ENCODE measurements at regions of chr5 and their contacts with region 1.

Region 1: DNA sequence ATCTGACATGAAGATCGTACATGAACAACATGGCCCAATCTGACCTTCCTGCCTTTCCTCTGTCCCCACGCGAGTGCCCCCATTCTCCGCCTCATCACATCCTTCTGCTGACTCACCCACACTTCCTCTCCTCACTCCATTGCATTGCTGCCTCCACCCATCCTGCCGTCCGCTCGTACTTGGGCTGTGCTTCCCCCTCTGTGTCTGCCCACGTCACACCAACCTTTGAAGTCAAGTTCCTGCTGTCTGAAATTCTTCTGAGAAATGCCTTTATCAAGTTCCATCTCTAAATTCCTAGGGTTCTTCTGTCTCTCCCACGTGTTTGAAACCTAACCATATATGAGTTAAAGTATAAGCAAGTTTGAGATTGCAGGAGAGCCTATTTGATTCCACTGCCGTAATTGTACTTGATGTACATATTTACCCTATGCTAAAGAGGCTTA is 18.0 kb upstream of the STARD4 start:
- DNase-seq: no peak
- H3K4me3 ChIP-seq: no peak overlapping the region
- H3K27ac ChIP-seq: peak overlapping the region in 1 of 2 experiments; percentile 27; a peak in 1 of 4 replicates
- H3K4me1 ChIP-seq: peaks cover 0 to 4% of the 10 kb centered on the region in 2 experiments; a peak in 3 of 4 replicates
- H3K27me3 ChIP-seq: no peaks in the 10 kb centered on the region
- CTCF ChIP-seq: no peak
- EP300 ChIP-seq: no peak
- RAD21 ChIP-seq: no peak

Region 2: GRCh38 chr5:111507276-111507675 is 23.0 kb before region 1 on chr5:
- CTCF ChIA-PET with region 1: interaction called, 20 read pairs
- POLR2A ChIA-PET with region 1: no interaction called
- DNase-seq: no peak
- H3K4me3 ChIP-seq: no peak overlapping the region
- H3K27ac ChIP-seq: no peak overlapping the region
- H3K4me1 ChIP-seq: peaks cover 0 to 5% of the 10 kb centered on the region in 2 experiments; a peak in 2 of 4 replicates
- H3K27me3 ChIP-seq: no peaks in the 10 kb centered on the region
- CTCF ChIP-seq: no peak
- EP300 ChIP-seq: no peak
- RAD21 ChIP-seq: no peak

Region 3: DNA sequence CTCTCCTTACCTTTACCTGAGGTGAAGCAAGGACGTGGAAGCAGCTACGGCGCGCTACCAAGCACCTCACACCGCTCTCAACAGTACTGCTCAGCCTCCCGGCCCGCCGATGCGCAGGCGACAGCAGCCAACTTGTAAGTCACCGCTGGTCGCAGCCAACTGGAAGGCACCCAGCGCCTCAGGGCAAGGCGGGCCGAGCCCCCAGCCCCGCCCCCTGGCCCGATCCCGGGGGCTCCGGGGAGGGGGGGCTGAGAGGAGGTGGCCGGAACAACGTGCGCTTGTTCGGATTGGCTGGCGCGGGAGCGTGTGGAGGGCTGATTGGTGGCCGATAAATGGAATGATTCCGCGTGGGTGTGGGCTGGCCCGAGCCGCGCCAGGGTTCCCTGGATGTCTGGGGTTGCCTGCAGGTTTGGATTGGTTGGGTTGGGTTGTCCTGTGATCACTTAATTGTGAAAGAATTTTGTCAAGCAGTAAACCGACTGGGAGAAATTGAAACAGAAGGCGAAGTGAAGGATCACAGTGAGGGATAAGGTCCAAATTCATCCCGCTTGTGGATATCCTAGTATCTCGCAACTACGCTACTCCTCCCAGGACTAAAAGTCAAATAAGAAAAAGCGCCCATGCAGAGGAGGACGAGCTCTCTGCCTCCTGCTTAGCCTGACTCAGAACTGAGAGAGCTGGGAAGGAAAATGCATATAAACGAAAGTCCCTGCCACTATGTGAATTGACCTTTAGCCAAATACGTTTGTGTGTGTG is 17.8 kb before region 1 on chr5 and contains the start of gene STARD4:
- CTCF ChIA-PET with region 1: interaction called, 20 read pairs
- POLR2A ChIA-PET with region 1: no interaction called
- DNase-seq: peak; percentile 96
- H3K4me3 ChIP-seq: peak within 1 kb of the TSS; percentile 92 to 98
- H3K27ac ChIP-seq: peak within 1 kb of the TSS; percentile 81 to 90
- H3K4me1 ChIP-seq: peaks cover 3 to 5% of the 10 kb centered on the region in 2 experiments; a peak in 3 of 4 replicates
- H3K27me3 ChIP-seq: no peaks in the 10 kb centered on the region
- CTCF ChIP-seq: no peak
- EP300 ChIP-seq: peak in 1 of 2 experiments; percentile 44; a peak in 1 of 4 replicates
- RAD21 ChIP-seq: no peak
- polyA plus RNA-seq, gene STARD4: 10.0 and 11.0 TPM in 2 replicates

Region 4: GRCh38 chr5:111517853-111518501 is 12.3 kb before region 1 on chr5:
- CTCF ChIA-PET with region 1: interaction called, 20 read pairs
- POLR2A ChIA-PET with region 1: no interaction called
- DNase-seq: no peak
- H3K4me3 ChIP-seq: no peak overlapping the region
- H3K27ac ChIP-seq: no peak overlapping the region
- H3K4me1 ChIP-seq: peaks cover 0 to 3% of the 10 kb centered on the region in 2 experiments; a peak in 2 of 4 replicates
- H3K27me3 ChIP-seq: no peaks in the 10 kb centered on the region
- CTCF ChIP-seq: no peak
- EP300 ChIP-seq: no peak
- RAD21 ChIP-seq: no peak

Region 5: DNA sequence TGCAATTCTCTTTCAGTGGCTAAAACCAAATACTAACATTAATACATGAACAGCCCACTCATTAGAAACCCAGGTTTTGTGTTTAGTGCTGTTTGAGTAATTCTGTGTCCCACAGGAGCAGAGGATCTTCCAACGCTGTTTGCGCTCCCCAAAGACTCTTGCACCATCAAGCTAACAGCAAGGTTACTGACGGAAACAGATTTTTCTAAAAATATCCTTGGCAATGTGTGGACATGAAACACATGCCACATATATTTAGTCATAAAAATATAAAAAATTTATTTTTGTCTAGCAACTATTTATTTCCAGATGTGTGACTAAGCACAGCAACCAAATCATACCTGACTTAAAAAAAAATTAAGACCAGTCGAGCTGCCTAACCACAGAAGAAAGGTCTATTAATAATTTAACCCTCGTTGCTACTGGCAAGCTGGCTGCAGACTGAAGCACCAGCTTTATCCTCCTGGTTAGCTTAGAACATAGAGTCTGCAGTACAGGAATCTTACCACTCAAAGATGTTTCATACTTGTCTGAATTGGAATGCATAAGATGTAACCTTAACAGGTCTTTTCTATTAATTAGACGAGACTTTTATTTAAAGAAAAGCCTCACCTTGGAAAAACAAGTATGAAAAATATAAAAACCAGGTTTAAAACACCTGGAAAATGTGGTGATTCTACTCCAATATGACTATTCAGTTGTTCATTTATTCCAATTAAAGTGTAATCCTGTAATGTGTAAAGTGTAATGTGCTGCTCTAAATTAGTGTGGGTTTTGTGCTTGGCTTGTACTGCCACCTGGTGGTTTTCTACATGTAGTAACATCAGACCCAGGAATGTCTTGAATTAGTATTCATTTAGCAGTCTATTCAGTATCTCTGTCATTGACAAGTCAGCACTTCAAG is 616.3 kb after region 1 on chr5:
- CTCF ChIA-PET with region 1: interaction called, 13 read pairs
- POLR2A ChIA-PET with region 1: no interaction called
- DNase-seq: peak; percentile 46
- H3K4me3 ChIP-seq: no peak overlapping the region; a peak in 1 of 4 replicates
- H3K27ac ChIP-seq: peak overlapping the region; percentile 71 to 72
- H3K4me1 ChIP-seq: peaks cover 0 to 3% of the 10 kb centered on the region in 2 experiments; a peak in 2 of 4 replicates
- H3K27me3 ChIP-seq: no peaks in the 10 kb centered on the region
- CTCF ChIP-seq: peak; percentile 87
- EP300 ChIP-seq: 0 out of 4 replicates have a peak, but pooled peaks of 1 of the 2 experiments have one; percentile 18
- RAD21 ChIP-seq: peak; percentile 99

Measured in SK-N-SH (cell line).